PC-3 (cell line): ENCODE measurements at regions of chr12 and their contacts with region 1.

Region 1: DNA sequence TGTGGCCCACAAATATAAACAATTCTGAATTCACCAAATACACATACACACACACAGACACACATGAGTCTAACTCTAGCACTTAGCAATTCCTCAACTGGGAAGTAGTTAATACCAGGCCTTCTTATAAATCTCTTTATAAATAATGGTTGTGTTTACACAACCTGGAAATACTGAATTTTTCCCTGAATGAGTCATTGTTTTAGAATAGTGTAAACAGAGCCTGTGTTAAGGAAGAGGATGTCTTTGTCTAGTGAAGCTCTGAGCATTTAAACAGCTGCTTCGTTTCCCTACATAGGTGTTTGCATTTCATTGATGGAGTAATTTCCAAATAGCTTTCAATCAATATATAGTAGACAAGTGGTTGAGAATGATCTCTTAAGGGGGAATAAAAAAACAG is 218.8 kb downstream of the BTG1 start:
- DNase-seq: peak; percentile 94
- ATAC-seq: peak; percentile 96
- H3K4me3 ChIP-seq: no peak overlapping the region
- H3K27ac ChIP-seq: peak overlapping the region; percentile 36; the same call in 1 of the 2 replicates
- H3K4me1 ChIP-seq: peaks cover 24% of the 10 kb centered on the region
- H3K27me3 ChIP-seq: no peaks in the 10 kb centered on the region
- CTCF ChIP-seq: no peak

Region 2: DNA sequence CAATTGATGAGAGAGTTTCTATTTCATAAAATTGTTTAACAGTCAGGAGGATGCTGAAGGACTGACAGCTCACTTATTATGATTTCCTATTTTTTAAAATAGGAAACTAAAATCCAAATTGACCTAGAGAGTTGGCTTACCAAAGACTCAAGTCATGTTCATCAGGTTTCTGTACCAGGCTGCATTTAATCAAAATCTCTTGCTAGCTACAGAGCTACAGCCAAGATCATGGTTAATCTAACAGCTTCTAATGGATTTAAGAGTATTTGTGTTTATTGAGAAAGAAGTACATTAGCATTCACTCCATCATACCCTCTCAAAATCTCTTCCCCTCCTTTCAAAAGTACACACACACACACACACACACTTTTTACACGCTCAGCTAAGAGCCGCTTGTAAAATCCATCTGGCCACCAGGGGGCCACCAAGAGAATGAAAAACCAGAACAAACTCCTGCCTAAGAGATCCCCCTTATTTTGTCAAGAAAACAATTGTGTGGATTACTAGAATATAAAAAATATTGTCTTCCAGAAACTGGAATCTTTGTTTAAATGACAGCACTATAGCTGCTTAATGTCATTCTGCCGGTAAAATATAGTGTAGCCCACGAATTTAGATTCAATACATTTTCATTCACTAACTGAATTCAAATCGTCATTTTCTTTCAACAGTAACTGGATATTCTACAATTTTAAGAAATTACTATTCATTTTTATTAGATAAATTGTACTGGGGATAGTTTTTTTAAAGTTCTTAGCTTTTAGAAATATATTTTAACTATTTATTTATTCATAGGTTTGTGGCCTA is 115.2 kb before region 1 on chr12:
- CTCF ChIA-PET with region 1: interaction called, 4 read pairs
- POLR2A ChIA-PET with region 1: no interaction called
- intact Hi-C with region 1: loop called (anchors 2 kb)
- DNase-seq: peak; percentile 72
- ATAC-seq: peak; percentile 53
- H3K4me3 ChIP-seq: no peak overlapping the region
- H3K27ac ChIP-seq: no peak overlapping the region
- H3K4me1 ChIP-seq: no peaks in the 10 kb centered on the region
- H3K27me3 ChIP-seq: no peaks in the 10 kb centered on the region
- CTCF ChIP-seq: peak; percentile 93

Region 3: DNA sequence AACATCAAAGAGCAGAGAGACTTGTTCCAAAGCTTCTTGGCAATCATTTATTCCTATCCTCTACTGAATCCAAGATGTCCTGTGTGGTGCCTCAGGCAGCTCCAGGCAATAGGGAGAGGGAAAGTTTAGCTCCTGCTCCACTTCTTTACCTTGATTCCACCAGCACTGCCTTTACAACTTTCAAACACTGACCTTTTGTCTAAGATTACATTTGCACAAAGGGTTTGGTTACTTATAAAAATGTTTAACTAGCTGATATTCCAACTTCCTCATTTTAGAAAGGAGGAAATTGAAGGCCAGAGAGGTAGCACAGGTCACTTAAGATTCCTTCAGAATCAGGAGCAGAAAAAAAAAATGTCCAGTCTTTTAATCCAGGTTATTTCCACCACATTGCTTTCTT is 26.1 kb after region 1 on chr12:
- CTCF ChIA-PET with region 1: interaction called, 3 read pairs
- POLR2A ChIA-PET with region 1: no interaction called
- intact Hi-C with region 1: loop called (anchors 2 kb)
- DNase-seq: peak; percentile 15
- ATAC-seq: peak; percentile 88
- H3K4me3 ChIP-seq: no peak overlapping the region
- H3K27ac ChIP-seq: no peak overlapping the region
- H3K4me1 ChIP-seq: peaks cover 3% of the 10 kb centered on the region; the same call in 1 of the 2 replicates
- H3K27me3 ChIP-seq: no peaks in the 10 kb centered on the region
- CTCF ChIP-seq: no peak